GM12878 (cell line): ENCODE measurements at regions of chr7 and their contacts with region 1.

Region 1: DNA sequence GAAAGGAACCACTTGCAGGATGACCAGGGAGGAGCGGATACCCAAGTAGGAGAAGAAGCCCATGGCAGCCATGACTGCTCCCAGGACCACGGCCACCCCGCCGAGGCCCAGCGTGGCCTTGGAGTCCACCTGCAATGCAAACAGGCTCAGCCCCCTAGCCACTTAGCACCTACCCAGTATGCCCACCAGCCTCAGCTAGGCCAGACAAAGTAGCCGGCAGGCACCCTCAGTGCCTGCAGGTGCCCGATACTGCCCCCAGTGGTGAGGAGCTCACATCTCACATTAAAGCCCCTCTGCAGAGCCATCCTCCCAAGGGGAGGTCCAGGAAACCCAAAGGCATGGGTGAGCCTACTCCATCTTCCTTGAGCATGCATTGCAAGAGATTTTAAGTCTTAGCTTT is 6.6 kb downstream of the NPC1L1 start:
- DNase-seq: no peak
- ATAC-seq: peak; percentile 94
- H3K4me3 ChIP-seq: no peak overlapping the region
- H3K27ac ChIP-seq: no peak overlapping the region
- H3K4me1 ChIP-seq: no peaks in the 10 kb centered on the region
- H3K27me3 ChIP-seq: no peaks in the 10 kb centered on the region
- CTCF ChIP-seq: peak; percentile 61 to 89 (median 78)
- EP300 ChIP-seq: no peak
- POLR2A ChIP-seq: no peak
- RAD21 ChIP-seq: peak; percentile 43

Region 2: GRCh38 chr7:44547536-44548231 is 13.2 kb after region 1 on chr7:
- CTCF ChIA-PET with region 1: interaction called, 12 read pairs
- POLR2A ChIA-PET with region 1: no interaction called
- RAD21 ChIA-PET with region 1: no interaction called
- SMC1A ChIA-PET with region 1: interaction called, 3 read pairs
- in situ Hi-C with region 1: no loop called
- intact Hi-C with region 1: no loop called
- DNase-seq: no peak
- ATAC-seq: no peak
- H3K4me3 ChIP-seq: no peak overlapping the region
- H3K27ac ChIP-seq: no peak overlapping the region
- H3K4me1 ChIP-seq: no peaks in the 10 kb centered on the region
- H3K27me3 ChIP-seq: no peaks in the 10 kb centered on the region; a peak in 2 of 4 replicates
- CTCF ChIP-seq: no peak
- EP300 ChIP-seq: no peak
- POLR2A ChIP-seq: no peak
- RAD21 ChIP-seq: no peak

Region 3: GRCh38 chr7:45524445-45524844 is 989.9 kb after region 1 on chr7:
- CTCF ChIA-PET with region 1: no interaction called
- POLR2A ChIA-PET with region 1: no interaction called
- RAD21 ChIA-PET with region 1: no interaction called
- SMC1A ChIA-PET with region 1: no interaction called
- in situ Hi-C with region 1: no loop called
- intact Hi-C with region 1: no loop called
- DNase-seq: no peak
- ATAC-seq: no peak
- H3K4me3 ChIP-seq: no peak overlapping the region
- H3K27ac ChIP-seq: no peak overlapping the region
- H3K4me1 ChIP-seq: no peaks in the 10 kb centered on the region
- H3K27me3 ChIP-seq: no peaks in the 10 kb centered on the region
- CTCF ChIP-seq: no peak
- EP300 ChIP-seq: no peak
- POLR2A ChIP-seq: no peak
- RAD21 ChIP-seq: no peak